Esophagus muscularis mucosa (tissue), 4 donors: ENCODE measurements at regions of chr6 and their contacts with region 1.

Region 1: GRCh38 chr6:34529662-34530327 is 26.3 kb downstream of the SPDEF start:
- DNase-seq: no peak
- H3K4me3 ChIP-seq: no peak overlapping the region
- H3K27ac ChIP-seq: no peak overlapping the region
- H3K4me1 ChIP-seq: peaks cover 5 to 18% (median 14%) of the 10 kb centered on the region in 4 donors
- H3K27me3 ChIP-seq: no peaks in the 10 kb centered on the region
- CTCF ChIP-seq: no peak
- EP300 ChIP-seq: no peak
- POLR2A ChIP-seq: no peak

Region 2: DNA sequence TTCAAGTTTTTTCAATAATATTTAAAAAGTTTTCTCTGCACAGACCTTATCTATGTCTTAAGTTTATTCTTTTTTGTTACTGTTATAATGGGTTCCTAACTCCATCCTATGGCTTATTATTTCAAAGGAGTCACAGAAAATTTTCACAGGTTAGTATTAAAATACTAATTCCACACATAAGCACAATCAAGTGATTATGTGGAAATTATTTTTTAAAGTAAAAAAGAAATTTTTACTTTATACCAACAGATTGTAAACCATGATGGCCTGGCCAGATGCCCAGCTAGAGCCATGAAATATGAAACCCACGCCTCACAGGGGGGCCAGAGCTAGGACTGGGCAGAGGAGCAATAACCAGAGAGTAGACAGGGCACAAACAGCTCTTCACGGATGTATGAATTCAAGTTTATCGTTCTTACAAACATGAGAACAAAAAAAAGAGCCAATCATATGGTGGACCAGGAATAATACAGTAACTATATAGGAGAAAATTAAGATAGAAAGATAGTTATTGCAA is 171.3 kb before region 1 on chr6:
- intact Hi-C with region 1: no loop called
- DNase-seq: no peak
- H3K4me3 ChIP-seq: no peak overlapping the region
- H3K27ac ChIP-seq: no peak overlapping the region
- H3K4me1 ChIP-seq: peaks cover 17 to 43% (median 32%) of the 10 kb centered on the region in 4 donors
- H3K27me3 ChIP-seq: no peaks in the 10 kb centered on the region
- CTCF ChIP-seq: no peak
- EP300 ChIP-seq: no peak
- POLR2A ChIP-seq: no peak

Region 3: DNA sequence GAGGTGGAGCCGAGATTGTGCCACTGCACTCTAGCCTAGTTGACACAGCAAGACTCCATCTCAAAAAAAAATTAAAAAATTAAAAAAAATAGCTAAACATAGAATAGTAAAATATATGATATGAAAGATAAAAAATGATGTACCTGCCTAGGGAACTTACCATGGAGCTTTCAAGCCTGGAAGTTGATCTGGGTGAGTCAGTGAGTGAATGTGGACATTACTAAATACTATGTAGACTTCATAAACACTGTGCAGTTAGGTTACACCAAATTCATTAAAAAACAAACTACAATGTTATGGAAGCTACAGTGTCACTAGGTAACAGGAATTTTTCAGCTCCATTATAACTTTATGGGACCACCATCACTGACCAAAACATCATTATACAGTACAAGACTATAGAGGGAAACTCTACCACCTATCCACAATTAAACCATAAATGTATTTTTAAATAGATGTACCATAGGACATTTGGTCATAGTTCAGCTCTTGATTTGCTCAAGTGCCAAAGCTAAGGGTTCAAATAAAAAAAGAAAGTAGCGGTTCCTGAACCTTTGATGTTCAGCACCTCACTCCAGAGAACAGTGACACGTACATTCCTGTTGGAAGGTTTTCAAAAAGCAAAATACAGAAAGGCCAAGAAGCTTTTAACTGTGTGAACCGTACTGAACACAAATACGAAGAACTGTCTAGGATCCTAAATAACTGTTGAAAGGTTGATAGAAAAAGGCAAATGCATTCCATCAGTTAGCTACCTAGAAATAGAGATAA is 78.7 kb after region 1 on chr6:
- intact Hi-C with region 1: loop called (anchors 2 kb)
- DNase-seq: no peak
- H3K4me3 ChIP-seq: no peak overlapping the region
- H3K27ac ChIP-seq: peak overlapping the region in 3 of 4 donors; percentile 41 to 64 (median 61)
- H3K4me1 ChIP-seq: peaks cover 22 to 38% (median 25%) of the 10 kb centered on the region in 4 donors
- H3K27me3 ChIP-seq: no peaks in the 10 kb centered on the region
- CTCF ChIP-seq: no peak
- EP300 ChIP-seq: no peak
- POLR2A ChIP-seq: no peak

Region 4: DNA sequence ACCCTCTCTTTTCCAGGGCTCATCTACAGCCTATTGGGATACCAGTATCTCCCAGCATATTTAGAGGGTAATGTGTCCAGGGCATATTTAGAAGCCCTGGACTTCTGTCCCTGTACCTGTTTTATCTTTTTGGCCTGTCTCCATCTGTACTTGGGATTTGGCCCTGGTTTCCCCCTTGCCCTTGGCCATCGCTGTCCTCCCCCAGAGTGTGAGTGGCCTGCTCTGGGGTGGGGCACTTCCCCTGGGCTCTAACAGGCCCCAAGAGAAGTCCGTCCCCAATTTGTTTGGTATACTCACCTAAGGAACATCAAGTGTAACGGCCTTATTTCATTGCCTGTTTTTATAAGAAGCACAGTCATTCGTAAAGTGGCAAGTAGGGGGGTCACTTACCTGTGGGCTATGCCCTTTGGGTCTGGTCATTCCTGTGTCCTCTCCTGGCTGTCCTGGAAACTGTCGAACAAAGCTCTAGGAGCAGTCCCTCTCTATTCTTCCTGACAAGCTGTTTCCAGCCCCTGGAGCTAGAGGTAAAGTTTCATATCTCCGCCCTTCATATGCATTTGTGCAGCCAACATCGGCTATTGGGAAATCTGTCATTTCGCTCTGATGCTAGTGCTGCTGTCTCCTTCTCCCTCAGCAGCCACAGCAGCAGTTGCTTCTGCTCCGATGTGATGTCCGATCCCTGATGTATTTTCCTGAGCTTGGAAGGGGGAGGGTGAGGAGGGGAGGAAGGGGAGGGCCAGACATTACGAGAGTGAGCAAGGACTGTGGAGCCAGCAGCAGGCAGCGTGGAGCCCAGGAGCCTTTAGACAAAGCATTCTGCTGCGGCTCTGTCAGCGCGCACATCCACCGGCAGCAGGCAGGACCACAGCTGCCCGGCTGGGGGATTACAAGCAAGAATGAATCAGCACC is 527.9 kb after region 1 on chr6:
- intact Hi-C with region 1: no loop called
- DNase-seq: no peak
- H3K4me3 ChIP-seq: peak overlapping the region in 1 of 4 donors; percentile 14
- H3K27ac ChIP-seq: peak overlapping the region; percentile 69 to 92 (median 88)
- H3K4me1 ChIP-seq: peaks cover 54 to 100% (median 98%) of the 10 kb centered on the region in 4 donors
- H3K27me3 ChIP-seq: no peaks in the 10 kb centered on the region
- CTCF ChIP-seq: no peak
- EP300 ChIP-seq: no peak
- POLR2A ChIP-seq: no peak